ENCODE measurements at regions of chr2 and their contacts with region 1.

Region 1: GRCh38 chr2:84631047-84631446 is 114.7 kb downstream of the DNAH6 start:
- DNase-seq: peak; percentile 30
- H3K4me3 ChIP-seq: no peak overlapping the region
- H3K27ac ChIP-seq: no peak overlapping the region
- H3K4me1 ChIP-seq: no peaks in the 10 kb centered on the region
- H3K27me3 ChIP-seq: peaks cover 2 to 6% of the 10 kb centered on the region in 2 experiments
- CTCF ChIP-seq: peak; percentile 39 to 49
- POLR2A ChIP-seq: no peak

Region 2: DNA sequence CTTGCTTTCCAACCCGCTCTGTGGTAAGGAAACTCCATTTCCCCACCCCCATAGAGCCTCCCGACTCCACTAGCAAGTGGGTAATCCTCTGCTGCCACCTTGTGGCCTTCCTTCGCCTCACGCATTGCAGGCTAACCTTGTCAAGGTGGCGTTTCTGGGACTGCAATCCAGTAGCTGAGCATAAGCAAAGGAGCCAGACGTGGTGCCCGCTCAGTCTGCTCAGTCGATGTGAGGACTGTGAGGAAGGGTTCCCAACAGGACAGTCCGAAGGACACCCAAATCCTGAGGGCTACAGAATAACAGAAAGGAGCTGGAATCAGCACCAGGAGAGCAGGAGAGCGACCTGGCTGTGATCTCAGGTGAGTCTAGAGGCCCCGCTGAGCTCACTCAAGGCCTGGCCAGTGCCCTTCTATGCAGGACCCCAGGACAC is 316.1 kb before region 1 on chr2:
- CTCF ChIA-PET with region 1: interaction called, 7 read pairs
- POLR2A ChIA-PET with region 1: no interaction called
- dilution Hi-C with region 1: no loop called
- intact Hi-C with region 1: loop called (anchors 2 kb)
- DNase-seq: peak; percentile 69
- H3K4me3 ChIP-seq: no peak overlapping the region
- H3K27ac ChIP-seq: no peak overlapping the region
- H3K4me1 ChIP-seq: no peaks in the 10 kb centered on the region
- H3K27me3 ChIP-seq: no peaks in the 10 kb centered on the region
- CTCF ChIP-seq: peak; percentile 84 to 88
- POLR2A ChIP-seq: no peak

Measured in endothelial cell of umbilical vein (primary cell).